Sigmoid colon (tissue), 7 donors: ENCODE measurements at regions of chr12 and their contacts with region 1.

Region 1: DNA sequence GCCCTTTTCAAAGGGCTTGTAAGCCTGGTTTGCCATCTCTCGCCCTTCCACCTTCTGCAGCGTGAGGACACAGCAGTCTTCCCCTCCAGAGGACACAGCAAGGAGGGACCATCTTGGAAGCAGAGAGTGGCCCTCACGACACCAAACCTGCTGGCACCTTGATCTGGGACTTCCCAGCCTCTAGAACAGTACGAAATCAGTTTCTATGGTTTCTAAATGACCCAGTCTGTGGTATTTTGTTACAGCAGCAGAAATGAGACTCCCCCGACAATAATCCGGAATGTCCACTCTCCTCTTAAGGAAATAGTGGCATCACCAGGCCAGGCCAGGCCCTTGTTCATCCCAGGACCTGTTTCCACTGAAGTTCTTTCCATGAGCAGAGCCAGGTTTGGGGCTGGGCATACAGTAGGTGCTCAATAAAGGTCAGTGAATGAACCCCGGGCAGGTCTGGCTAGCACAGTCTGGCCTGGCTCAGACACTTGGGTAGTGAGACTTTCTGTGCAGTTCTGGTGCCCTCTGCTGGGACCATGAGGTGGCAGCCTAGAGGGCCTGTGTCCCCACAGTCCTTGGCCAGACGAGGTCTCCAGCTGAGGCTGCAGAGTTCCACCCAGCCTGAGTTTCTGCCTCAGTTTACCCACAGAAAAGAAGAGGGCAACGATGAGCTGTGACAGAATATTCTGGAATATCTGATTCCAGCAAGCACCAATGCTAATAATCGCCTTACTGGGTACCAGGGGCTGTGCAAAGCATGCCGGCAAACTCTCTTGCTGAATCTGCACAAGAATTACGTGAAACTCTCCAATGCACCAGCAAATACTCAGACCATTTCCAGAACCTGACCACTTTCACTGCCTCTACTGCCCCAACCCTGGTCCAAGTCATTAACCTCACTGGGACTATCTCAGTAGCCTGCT is 14.0 kb downstream of the ABCB9 start:
- DNase-seq: peak; percentile 80
- H3K4me3 ChIP-seq: no peak overlapping the region
- H3K27ac ChIP-seq: no peak overlapping the region
- H3K4me1 ChIP-seq: peaks cover 0 to 3% (median under 1%) of the 10 kb centered on the region in 4 donors
- H3K27me3 ChIP-seq: no peaks in the 10 kb centered on the region
- CTCF ChIP-seq: peak; percentile 67 to 83 (median 80)
- EP300 ChIP-seq: no peak
- POLR2A ChIP-seq: no peak

Region 2: GRCh38 chr12:122793685-122794106 is 158.5 kb before region 1 on chr12:
- intact Hi-C with region 1: loop called (anchors 1 kb)
- DNase-seq: no peak
- H3K4me3 ChIP-seq: no peak overlapping the region
- H3K27ac ChIP-seq: no peak overlapping the region
- H3K4me1 ChIP-seq: no peaks in the 10 kb centered on the region
- H3K27me3 ChIP-seq: no peaks in the 10 kb centered on the region
- CTCF ChIP-seq: peak; percentile 27 to 69 (median 42)
- EP300 ChIP-seq: no peak
- POLR2A ChIP-seq: no peak

Region 3: GRCh38 chr12:122860346-122861090 is 91.7 kb before region 1 on chr12:
- intact Hi-C with region 1: loop called (anchors 1 kb)
- DNase-seq: peak; percentile 92
- H3K4me3 ChIP-seq: no peak overlapping the region
- H3K27ac ChIP-seq: peak overlapping the region in 2 of 4 donors; percentile 14 to 62
- H3K4me1 ChIP-seq: peaks cover 0 to 10% (median 8%) of the 10 kb centered on the region in 4 donors
- H3K27me3 ChIP-seq: no peaks in the 10 kb centered on the region
- CTCF ChIP-seq: peak; percentile 91 to 97 (median 95)
- EP300 ChIP-seq: no peak
- POLR2A ChIP-seq: no peak

Region 4: GRCh38 chr12:122917504-122918121 is 34.6 kb before region 1 on chr12:
- intact Hi-C with region 1: no loop called
- DNase-seq: peak; percentile 66
- H3K4me3 ChIP-seq: no peak overlapping the region
- H3K27ac ChIP-seq: peak overlapping the region; percentile 12 to 81 (median 62)
- H3K4me1 ChIP-seq: peaks cover 0 to 17% (median 13%) of the 10 kb centered on the region in 4 donors
- H3K27me3 ChIP-seq: no peaks in the 10 kb centered on the region
- CTCF ChIP-seq: no peak
- EP300 ChIP-seq: no peak
- POLR2A ChIP-seq: no peak